Activated CD4-positive, alpha-beta T cell treated with anti-CD3 and anti-CD28 coated beads for 36 hours (primary cell): ENCODE measurements at regions of chr5 and their contacts with region 1.

Region 1: DNA sequence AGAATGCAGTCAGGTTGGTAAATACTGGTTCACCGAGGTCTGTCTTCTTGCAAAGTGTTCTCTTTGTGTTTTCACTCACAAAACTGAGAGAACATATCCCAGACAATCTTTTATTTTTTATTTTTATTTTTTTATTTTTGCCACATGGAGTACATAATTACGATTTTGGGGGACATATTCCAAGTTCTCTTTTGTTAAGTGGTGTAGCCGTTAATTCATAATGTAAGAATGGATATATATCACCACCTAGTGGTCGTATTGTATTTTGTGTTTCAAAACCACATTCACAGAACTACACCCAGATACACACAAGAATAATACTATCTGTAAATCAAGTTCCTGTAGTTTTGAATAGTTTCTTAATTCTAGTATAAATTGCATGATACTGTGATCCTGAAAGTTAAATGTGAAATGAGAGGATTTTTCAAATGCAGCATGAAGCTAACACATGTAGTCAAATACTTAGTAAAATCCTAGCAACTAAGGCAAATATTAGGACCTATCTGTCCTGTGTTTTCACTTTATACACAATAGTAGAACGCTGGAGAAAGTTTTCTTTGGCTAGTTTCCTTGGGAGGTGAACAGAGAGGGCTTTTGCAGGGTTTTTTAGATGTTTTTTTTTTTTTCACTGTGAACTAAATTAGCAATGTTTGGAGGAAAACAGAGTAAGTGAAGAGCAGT is 92.7 kb downstream of the VCAN start:
- DNase-seq: no peak
- ATAC-seq: no peak
- H3K4me3 Mint-ChIP-seq: no peak overlapping the region
- H3K27ac Mint-ChIP-seq: no peak overlapping the region
- H3K4me1 Mint-ChIP-seq: no peaks in the 10 kb centered on the region
- H3K27me3 Mint-ChIP-seq: peaks cover 9% of the 10 kb centered on the region

Region 2: GRCh38 chr5:82174128-82174918 is 1389.9 kb before region 1 on chr5:
- CTCF ChIA-PET with region 1: no interaction called
- POLR2A ChIA-PET with region 1: no interaction called
- intact Hi-C with region 1: loop called in 1 of 2 experiments (anchors 5 kb)
- DNase-seq: peak; percentile 86
- ATAC-seq: peak; percentile 71
- H3K4me3 Mint-ChIP-seq: no peak overlapping the region
- H3K27ac Mint-ChIP-seq: no peak overlapping the region
- H3K4me1 Mint-ChIP-seq: peaks cover 7% of the 10 kb centered on the region
- H3K27me3 Mint-ChIP-seq: no peaks in the 10 kb centered on the region

Region 3: GRCh38 chr5:82635561-82636288 is 928.5 kb before region 1 on chr5:
- CTCF ChIA-PET with region 1: no interaction called
- POLR2A ChIA-PET with region 1: no interaction called
- intact Hi-C with region 1: loop called in 1 of 2 experiments (anchors 10 kb)
- DNase-seq: peak; percentile 41
- ATAC-seq: peak; percentile 96
- H3K4me3 Mint-ChIP-seq: no peak overlapping the region
- H3K27ac Mint-ChIP-seq: no peak overlapping the region
- H3K4me1 Mint-ChIP-seq: peaks cover 6% of the 10 kb centered on the region
- H3K27me3 Mint-ChIP-seq: no peaks in the 10 kb centered on the region

Region 4: DNA sequence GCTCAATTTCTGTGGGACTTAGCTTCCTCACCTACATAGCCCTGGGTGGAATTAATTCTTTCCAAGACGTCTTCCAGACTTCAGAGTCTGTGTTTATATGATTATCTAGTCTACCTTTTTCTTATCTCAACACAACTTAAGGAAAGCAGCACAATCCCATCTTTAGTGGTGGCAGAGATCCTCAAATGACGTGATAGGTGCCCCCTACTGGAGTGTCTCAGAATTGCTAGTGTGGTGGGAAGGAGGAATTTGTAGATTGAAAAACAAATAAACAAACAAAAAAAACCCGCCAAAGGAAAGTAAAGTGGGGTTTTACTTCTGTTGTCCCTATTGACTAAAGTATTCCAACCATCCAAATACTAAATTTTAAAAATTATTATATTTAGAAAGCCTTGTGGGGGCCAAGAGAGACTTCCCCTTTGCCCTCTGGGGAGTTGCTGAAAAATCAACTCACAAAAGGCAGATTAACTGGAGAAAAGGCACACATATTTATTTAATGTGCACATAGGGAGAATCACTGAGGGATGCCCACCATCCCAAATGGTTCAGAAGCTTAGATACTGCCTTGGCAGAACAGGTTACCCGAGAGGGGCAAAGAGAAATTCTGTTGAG is 770.3 kb before region 1 on chr5:
- CTCF ChIA-PET with region 1: no interaction called
- POLR2A ChIA-PET with region 1: no interaction called
- intact Hi-C with region 1: loop called in 1 of 2 experiments (anchors 10 kb)
- DNase-seq: peak; percentile 62
- ATAC-seq: no peak
- H3K4me3 Mint-ChIP-seq: no peak overlapping the region
- H3K27ac Mint-ChIP-seq: no peak overlapping the region
- H3K4me1 Mint-ChIP-seq: no peaks in the 10 kb centered on the region
- H3K27me3 Mint-ChIP-seq: no peaks in the 10 kb centered on the region

Region 5: GRCh38 chr5:83473346-83474163 is 90.7 kb before region 1 on chr5:
- CTCF ChIA-PET with region 1: interaction called, 3 read pairs
- POLR2A ChIA-PET with region 1: no interaction called
- intact Hi-C with region 1: loop called in 1 of 2 experiments (anchors 5 kb)
- DNase-seq: peak; percentile 79
- ATAC-seq: peak; percentile 69
- H3K4me3 Mint-ChIP-seq: peak overlapping the region; percentile 75
- H3K27ac Mint-ChIP-seq: no peak overlapping the region
- H3K4me1 Mint-ChIP-seq: peaks cover 38% of the 10 kb centered on the region
- H3K27me3 Mint-ChIP-seq: peaks cover 58% of the 10 kb centered on the region